ENCODE measurements at regions of chr18 and their contacts with region 1.

Region 1: DNA sequence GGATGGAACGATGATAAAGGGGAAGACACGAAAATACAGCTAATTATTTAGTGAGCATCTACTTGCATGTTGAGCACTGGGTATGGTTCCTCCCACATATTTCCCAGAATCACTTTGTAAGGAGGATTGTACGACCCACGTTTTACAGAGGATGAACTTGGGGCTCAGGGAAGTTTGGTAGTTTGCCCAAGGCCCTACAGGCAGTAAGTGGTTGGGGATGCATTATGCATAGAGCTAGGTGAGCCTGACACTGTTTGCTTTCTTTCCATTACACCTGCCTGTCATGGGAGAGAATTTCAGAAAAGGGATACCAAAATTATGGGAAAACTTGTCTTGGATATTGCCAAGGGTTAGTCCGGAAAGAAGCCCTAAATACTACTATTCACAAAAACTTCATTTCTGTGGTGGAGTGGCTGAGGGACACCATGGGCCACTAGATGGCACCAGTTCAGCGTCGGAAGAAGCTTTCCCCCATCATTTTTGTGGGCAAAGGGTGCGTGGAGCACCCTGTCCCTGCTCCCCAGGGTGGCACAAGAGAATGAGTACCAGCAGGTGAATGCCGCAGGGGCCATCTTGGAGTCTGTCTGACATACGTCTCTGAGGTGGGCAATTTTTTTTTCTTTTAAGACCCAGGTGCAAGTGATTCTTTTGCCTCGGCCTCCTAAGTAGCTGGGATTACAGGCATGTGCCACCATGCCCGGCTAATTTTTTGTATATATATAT is 23.5 kb upstream of the C18orf32 start:
- DNase-seq: peak; percentile 64
- ATAC-seq: peak; percentile 64
- H3K4me3 Mint-ChIP-seq: no peak overlapping the region
- H3K27ac Mint-ChIP-seq: no peak overlapping the region
- H3K4me1 Mint-ChIP-seq: no peaks in the 10 kb centered on the region
- H3K27me3 Mint-ChIP-seq: peaks cover 12% of the 10 kb centered on the region
- CTCF ChIP-seq: peak; percentile 81

Region 2: GRCh38 chr18:49495076-49495475 is 15.5 kb before region 1 on chr18:
- CTCF ChIA-PET with region 1: interaction called, 11 read pairs
- POLR2A ChIA-PET with region 1: no interaction called
- intact Hi-C with region 1: no loop called
- DNase-seq: no peak
- ATAC-seq: no peak
- H3K4me3 Mint-ChIP-seq: no peak overlapping the region
- H3K27ac Mint-ChIP-seq: no peak overlapping the region
- H3K4me1 Mint-ChIP-seq: peaks cover 14% of the 10 kb centered on the region
- H3K27me3 Mint-ChIP-seq: peaks cover 4% of the 10 kb centered on the region
- CTCF ChIP-seq: no peak

Region 3: DNA sequence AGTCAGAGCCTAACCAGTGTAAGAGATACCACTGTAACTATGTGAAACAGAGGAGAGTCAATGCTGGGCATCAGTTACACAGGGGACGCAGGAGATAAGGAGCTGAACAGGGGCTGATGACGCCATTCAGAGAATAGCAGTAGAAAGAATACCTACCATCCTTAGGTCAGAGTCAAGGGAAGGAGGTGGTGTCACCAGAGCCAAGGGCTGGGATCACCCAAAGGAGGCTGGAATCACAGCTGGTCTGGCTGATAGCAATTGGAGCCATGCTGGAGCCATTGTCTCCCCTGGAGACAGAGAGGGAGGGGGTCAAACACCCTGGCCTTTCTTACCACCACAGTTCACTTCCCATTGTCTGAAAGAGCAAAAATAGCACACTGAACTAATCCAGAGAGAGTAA is 13.8 kb after region 1 on chr18:
- CTCF ChIA-PET with region 1: interaction called, 12 read pairs
- POLR2A ChIA-PET with region 1: no interaction called
- intact Hi-C with region 1: no loop called
- DNase-seq: no peak
- ATAC-seq: no peak
- H3K4me3 Mint-ChIP-seq: no peak overlapping the region
- H3K27ac Mint-ChIP-seq: no peak overlapping the region
- H3K4me1 Mint-ChIP-seq: no peaks in the 10 kb centered on the region
- H3K27me3 Mint-ChIP-seq: peaks cover 1% of the 10 kb centered on the region
- CTCF ChIP-seq: no peak

Measured in activated CD8-positive, alpha-beta T cell treated with anti-CD3 and anti-CD28 coated beads for 36 hours (primary cell).